Uterus (tissue), 4 donors: ENCODE measurements at regions of chr1 and their contacts with region 1.

Region 1: GRCh38 chr1:147541672-147542568 is 619 bp downstream of the BCL9 start:
- DNase-seq: peak; percentile 64 to 76
- H3K4me3 ChIP-seq: peak overlapping the region; percentile 77
- H3K27ac ChIP-seq: peak overlapping the region; percentile 96 to 98
- H3K4me1 ChIP-seq: peaks cover 3 to 11% of the 10 kb centered on the region in 2 donors
- H3K27me3 ChIP-seq: no peaks in the 10 kb centered on the region
- CTCF ChIP-seq: peak in 1 of 4 experiments; percentile 9
- POLR2A ChIP-seq: peak in 1 of 2 donors; percentile 13

Region 2: DNA sequence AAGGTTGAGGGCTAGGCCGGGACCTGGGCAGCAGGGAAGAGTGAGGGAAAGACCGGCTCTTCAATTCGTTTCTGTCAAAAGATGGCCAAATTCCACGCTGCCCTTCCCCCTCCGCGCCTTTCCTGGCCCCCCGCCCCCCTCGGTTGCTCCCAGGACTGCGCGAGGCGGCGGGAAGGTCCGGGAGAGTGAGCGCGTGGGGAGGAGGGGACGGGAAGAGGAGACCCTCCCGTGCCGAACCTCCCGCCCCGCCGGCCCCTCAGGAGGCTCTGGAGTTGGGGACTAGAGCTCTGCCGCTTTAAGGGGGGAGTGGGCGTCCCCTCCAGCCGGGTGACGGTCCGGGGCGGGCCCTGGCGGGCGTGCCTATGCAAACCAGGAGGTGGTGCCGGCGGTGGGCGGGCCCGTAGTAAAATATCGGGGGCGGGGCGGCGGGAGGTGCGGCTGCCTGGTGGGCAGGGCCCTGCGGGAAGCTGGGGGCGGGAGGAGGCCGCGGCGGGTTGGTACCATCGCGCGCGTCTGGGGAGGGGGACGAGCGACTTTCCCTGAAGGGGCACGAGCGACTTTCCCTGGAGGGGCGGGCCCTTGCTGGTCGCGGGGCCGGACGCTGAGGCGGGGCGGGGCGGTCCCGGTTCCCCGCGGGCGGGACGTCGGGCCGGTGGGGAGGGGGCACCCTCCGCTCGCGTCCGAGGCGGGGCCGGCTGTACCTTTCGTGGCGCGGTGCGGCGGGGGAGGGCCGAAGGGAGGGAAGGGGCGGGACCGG is 57.6 kb after region 1 on chr1:
- intact Hi-C with region 1: loop called (anchors 2 kb)
- DNase-seq: peak; percentile 98
- H3K4me3 ChIP-seq: peak overlapping the region; percentile 68 to 83
- H3K27ac ChIP-seq: peak overlapping the region; percentile 80 to 96
- H3K4me1 ChIP-seq: no peaks in the 10 kb centered on the region
- H3K27me3 ChIP-seq: no peaks in the 10 kb centered on the region
- CTCF ChIP-seq: peak in 2 of 4 experiments; percentile 15 to 20
- POLR2A ChIP-seq: peak; percentile 93 to 96